H1 (cell line): ENCODE measurements at regions of chr11 and their contacts with region 1.

Region 1: GRCh38 chr11:62245271-62245753 is 3.3 kb downstream of the SCGB1D2 start:
- DNase-seq: peak in 1 of 2 experiments; percentile 70
- H3K4me3 ChIP-seq: no peak overlapping the region
- H3K27ac ChIP-seq: no peak overlapping the region
- H3K4me1 ChIP-seq: peaks cover 0 to 5% (median under 1%) of the 10 kb centered on the region in 4 experiments; a peak in 4 of 7 replicates
- H3K27me3 ChIP-seq: no peaks in the 10 kb centered on the region
- CTCF ChIP-seq: peak; percentile 51 to 57 (median 57)
- EP300 ChIP-seq: no peak
- POLR2A ChIP-seq: no peak
- RAD21 ChIP-seq: peak; percentile 52 to 69

Region 2: GRCh38 chr11:62256281-62256680 is 11.0 kb after region 1 on chr11:
- CTCF ChIA-PET with region 1: interaction called, 10 read pairs
- POLR2A ChIA-PET with region 1: no interaction called
- DNase-seq: no peak
- H3K4me3 ChIP-seq: no peak overlapping the region
- H3K27ac ChIP-seq: no peak overlapping the region
- H3K4me1 ChIP-seq: no peaks in the 10 kb centered on the region
- H3K27me3 ChIP-seq: no peaks in the 10 kb centered on the region
- CTCF ChIP-seq: no peak
- EP300 ChIP-seq: no peak
- POLR2A ChIP-seq: no peak
- RAD21 ChIP-seq: no peak

Region 3: DNA sequence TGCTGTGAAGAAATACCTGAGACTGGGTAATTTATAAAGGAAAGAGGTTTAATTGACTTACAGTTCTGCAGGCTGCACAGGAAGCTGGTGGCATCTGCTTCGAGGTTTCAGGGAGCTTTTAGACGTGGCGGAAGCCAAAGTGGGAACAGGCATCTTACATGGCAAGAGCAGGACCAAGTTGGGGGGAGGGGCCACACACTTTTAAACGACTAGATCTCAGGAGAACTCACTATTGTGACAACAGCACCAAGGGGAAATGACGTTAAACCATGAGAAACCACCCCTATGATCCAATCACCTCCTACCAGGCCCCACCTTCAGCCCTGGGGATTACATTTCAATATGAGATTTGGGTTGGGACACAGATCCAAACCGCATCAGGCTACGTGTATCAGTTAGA is 64.7 kb after region 1 on chr11:
- CTCF ChIA-PET with region 1: interaction called, 12 read pairs
- POLR2A ChIA-PET with region 1: no interaction called
- DNase-seq: no peak
- H3K4me3 ChIP-seq: no peak overlapping the region
- H3K27ac ChIP-seq: no peak overlapping the region
- H3K4me1 ChIP-seq: peaks cover 0 to 2% (median 0%) of the 10 kb centered on the region in 4 experiments; a peak in 3 of 7 replicates
- H3K27me3 ChIP-seq: no peaks in the 10 kb centered on the region
- CTCF ChIP-seq: no peak
- EP300 ChIP-seq: no peak
- POLR2A ChIP-seq: no peak
- RAD21 ChIP-seq: no peak

Region 4: DNA sequence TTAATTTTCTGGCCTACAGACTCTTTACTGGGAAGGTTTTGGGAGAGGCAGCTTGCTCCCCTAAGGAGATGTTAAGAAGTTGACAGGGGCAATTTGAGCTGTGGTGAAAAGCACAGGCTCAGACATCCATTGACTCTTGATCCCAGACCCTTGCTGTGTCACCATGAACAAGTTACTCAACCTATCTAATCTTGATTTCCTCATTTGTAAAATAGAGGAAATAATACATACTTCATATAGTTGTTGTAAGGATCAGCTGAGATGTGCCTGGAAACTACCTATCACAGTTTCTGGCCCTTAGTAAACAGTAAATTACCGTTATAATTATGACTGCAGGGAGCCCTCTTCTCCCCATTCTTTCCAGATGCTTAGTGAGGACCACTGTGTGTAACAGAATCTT is 70.1 kb after region 1 on chr11:
- CTCF ChIA-PET with region 1: interaction called, 12 read pairs
- POLR2A ChIA-PET with region 1: no interaction called
- DNase-seq: no peak
- H3K4me3 ChIP-seq: no peak overlapping the region
- H3K27ac ChIP-seq: no peak overlapping the region
- H3K4me1 ChIP-seq: no peaks in the 10 kb centered on the region; a peak in 2 of 7 replicates
- H3K27me3 ChIP-seq: no peaks in the 10 kb centered on the region
- CTCF ChIP-seq: no peak
- EP300 ChIP-seq: no peak
- POLR2A ChIP-seq: no peak
- RAD21 ChIP-seq: no peak